ENCODE measurements at regions of chr4 and their contacts with region 1.

Region 1: DNA sequence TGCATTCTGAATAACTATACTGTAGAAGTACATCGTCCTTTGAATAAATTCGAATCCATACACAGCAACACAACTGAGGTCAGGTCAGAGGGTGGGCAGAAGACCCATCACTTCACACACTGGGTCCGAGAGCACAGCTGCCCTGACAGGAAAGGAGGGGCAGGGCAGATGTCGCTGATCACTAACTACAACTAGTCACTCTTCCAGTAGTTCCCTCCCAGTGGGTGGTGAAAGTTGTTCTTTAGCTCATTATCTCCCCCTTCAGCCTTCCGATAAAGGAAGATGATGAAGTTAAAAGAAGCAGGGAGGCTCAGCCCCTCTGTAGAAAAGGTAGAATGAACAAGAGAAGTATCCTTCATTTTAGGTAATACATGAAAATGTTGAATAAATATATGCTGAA is 278.9 kb downstream of the INPP4B start:
- DNase-seq: peak; percentile 77
- H3K4me3 Mint-ChIP-seq: peak overlapping the region; percentile 77
- H3K27ac Mint-ChIP-seq: peak overlapping the region; percentile 94
- H3K4me1 Mint-ChIP-seq: peaks cover 48% of the 10 kb centered on the region
- H3K27me3 Mint-ChIP-seq: no peaks in the 10 kb centered on the region

Region 2: DNA sequence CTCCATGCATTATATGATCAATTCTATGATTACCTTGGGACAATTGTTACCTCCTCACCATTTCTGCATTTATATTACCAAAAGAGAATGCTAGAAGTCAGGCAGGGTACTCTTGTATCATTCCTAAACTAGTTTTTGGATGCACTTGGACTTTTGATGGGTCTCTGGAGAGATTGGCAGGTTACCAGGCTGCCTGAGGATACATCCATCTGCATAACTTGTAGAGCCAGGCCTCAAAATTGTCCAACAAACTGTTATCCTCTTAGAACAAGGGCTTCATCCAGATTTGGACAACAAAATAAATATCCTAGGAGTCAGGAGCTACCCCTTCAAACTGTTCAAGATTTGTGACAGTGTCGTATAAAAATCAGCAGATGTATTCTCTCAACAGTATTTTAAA is 604.7 kb before region 1 on chr4:
- CTCF ChIA-PET with region 1: no interaction called
- intact Hi-C with region 1: no loop called
- DNase-seq: no peak
- H3K4me3 Mint-ChIP-seq: no peak overlapping the region
- H3K27ac Mint-ChIP-seq: no peak overlapping the region
- H3K4me1 Mint-ChIP-seq: no peaks in the 10 kb centered on the region
- H3K27me3 Mint-ChIP-seq: peaks cover 11% of the 10 kb centered on the region

Region 3: DNA sequence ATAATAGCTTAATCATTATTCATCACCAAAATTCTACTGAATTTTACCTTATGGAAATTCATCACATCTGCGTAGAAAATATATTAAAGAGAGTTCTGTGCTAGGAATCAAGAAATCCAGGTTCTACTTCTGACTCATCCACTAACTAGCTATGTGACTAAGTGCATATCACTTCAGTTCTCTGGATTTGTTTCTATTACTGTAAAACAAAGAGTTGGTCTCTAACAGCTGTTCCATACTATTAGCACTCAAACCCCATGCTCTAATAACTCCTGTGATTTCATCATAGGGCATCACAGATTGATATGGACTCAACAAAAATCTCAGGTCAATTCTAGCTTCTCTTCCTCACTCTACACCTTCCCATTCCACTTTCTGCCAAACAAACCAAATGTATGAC is 293.1 kb before region 1 on chr4:
- CTCF ChIA-PET with region 1: no interaction called
- intact Hi-C with region 1: loop called (anchors 2 kb)
- DNase-seq: no peak
- H3K4me3 Mint-ChIP-seq: no peak overlapping the region
- H3K27ac Mint-ChIP-seq: peak overlapping the region; percentile 79
- H3K4me1 Mint-ChIP-seq: peaks cover 85% of the 10 kb centered on the region
- H3K27me3 Mint-ChIP-seq: no peaks in the 10 kb centered on the region

Region 4: GRCh38 chr4:142379277-142380057 is 187.7 kb before region 1 on chr4:
- CTCF ChIA-PET with region 1: interaction called, 6 read pairs
- intact Hi-C with region 1: loop called (anchors 1 kb)
- DNase-seq: no peak
- H3K4me3 Mint-ChIP-seq: no peak overlapping the region
- H3K27ac Mint-ChIP-seq: peak overlapping the region; percentile 75
- H3K4me1 Mint-ChIP-seq: peaks cover 72% of the 10 kb centered on the region
- H3K27me3 Mint-ChIP-seq: no peaks in the 10 kb centered on the region

Region 5: DNA sequence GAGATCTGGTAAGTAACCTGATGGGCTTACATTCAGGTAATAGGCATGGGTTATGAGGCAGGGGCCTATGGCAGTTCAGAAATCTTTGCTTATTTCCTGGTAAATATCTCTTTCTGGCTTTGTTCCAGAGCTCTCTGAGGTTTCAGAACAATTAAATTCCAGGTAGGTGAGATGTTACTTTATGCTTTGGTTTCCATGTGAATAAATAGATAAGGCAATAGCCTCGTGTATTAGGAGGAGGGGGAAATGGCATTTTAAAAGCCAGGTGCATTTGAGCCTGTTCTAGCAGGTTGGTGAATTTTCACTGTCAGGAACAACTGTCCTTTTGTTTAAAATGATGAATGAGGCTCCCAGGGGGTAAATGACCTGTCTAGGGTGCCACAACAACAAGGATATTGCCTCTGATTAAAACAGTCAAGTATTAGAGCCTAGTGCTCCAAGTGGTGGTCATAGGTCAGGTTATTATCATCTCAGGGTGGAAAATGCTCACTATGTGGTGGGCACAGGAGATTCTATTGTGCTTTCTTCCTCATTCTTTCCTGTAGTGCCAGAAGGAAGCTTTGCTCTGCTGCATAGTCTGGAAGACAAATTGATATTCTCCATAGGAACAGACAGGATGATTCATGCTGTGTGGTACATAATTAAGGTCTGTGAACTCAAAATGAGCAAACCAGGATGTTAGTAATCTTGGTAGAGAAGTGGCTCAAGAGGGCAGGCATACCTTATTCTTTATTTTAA is 17.3 kb before region 1 on chr4:
- CTCF ChIA-PET with region 1: interaction called, 6 read pairs
- intact Hi-C with region 1: loop called (anchors 1 kb)
- DNase-seq: no peak
- H3K4me3 Mint-ChIP-seq: no peak overlapping the region
- H3K27ac Mint-ChIP-seq: peak overlapping the region; percentile 60
- H3K4me1 Mint-ChIP-seq: peaks cover 71% of the 10 kb centered on the region
- H3K27me3 Mint-ChIP-seq: no peaks in the 10 kb centered on the region

Region 6: DNA sequence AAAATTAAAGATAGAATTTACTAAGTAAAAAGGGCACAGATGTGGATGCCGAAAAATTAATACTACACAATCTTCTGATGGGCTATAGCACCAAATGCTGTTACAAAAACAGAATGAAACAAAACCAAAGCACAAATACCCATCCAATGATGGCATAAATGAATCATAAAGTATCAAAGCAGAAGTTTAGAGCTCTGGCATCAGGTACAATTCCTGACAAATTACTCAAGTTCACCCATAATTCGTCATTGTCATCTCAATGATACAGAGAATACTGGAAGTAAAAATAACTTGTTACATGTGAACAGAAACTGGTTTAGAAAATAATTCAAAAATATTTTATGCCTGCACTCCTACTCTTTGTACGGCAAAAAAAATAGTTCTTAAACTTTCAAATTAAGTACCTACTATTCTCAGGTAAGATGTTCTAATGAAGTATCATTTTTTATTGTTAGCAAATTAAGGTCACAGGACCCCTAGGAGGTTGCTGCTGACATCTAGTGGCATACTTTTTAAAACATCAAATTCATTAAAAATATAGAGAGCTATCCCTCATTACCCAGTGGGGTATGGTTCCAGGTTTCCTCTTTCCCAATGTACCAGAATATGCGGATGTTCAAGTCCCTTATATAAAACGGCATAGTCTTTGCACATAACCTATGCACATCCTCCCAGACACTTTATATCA is 152.8 kb after region 1 on chr4:
- CTCF ChIA-PET with region 1: interaction called, 6 read pairs
- intact Hi-C with region 1: loop called (anchors 1 kb)
- DNase-seq: no peak
- H3K4me3 Mint-ChIP-seq: no peak overlapping the region
- H3K27ac Mint-ChIP-seq: peak overlapping the region; percentile 84
- H3K4me1 Mint-ChIP-seq: peaks cover 42% of the 10 kb centered on the region
- H3K27me3 Mint-ChIP-seq: no peaks in the 10 kb centered on the region

Region 7: DNA sequence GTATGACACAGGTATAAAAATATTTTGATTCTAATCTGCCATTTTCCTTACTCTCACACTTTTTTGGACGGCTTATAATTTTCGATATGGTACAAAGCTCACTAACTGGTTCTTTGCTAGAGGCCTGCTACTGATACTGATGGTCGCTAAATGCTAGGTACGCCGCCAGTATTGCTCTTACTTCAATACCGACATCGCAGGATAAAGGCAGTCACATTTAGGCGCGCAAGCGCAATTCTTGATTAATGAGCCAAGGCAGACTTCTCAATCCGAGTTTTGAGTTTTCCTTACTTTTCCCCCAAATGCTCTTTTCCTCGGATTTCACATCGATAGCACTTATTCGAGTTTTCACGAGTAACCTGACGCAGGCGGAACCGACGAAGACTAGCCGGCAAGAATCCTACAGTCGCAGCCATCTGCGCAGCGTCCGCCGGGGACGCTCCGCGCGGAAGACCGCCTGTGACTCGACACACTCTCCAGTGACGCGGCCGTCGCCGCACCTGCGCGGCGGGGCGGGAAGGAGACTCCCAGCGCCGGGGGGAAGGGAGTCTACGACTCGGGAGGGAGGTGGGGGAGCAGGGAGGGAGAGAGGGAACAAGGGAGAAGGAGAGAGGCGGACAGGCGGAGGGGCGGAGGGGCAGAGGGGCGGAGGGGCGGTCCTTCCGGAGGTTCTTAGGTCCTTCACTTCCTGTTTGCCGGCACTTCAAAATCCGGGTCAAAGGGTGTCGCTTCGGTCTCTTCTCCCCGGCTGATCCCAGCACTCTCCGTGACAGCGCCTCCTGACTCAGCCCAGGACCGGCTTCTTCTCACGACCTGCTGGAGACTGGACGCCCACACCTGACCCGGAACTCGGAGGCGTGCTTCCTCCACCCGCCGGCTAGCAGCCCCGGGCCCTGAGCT is 617.3 kb after region 1 on chr4 and contains the start of gene USP38:
- CTCF ChIA-PET with region 1: no interaction called
- intact Hi-C with region 1: loop called (anchors 5 kb)
- DNase-seq: peak; percentile 93
- H3K4me3 Mint-ChIP-seq: peak within 1 kb of the TSS; percentile 95
- H3K27ac Mint-ChIP-seq: peak within 1 kb of the TSS; percentile 97
- H3K4me1 Mint-ChIP-seq: peaks cover 40% of the 10 kb centered on the region
- H3K27me3 Mint-ChIP-seq: no peaks in the 10 kb centered on the region
- total RNA-seq, gene USP38: 14.4 to 15.5 TPM

Measured in activated naive CD4-positive, alpha-beta T cell treated with anti-CD3 and anti-CD28 coated beads for 36 hours (primary cell).